CD8-positive, alpha-beta memory T cell (primary cell): ENCODE measurements at regions of chr7 and their contacts with region 1.

Region 1: DNA sequence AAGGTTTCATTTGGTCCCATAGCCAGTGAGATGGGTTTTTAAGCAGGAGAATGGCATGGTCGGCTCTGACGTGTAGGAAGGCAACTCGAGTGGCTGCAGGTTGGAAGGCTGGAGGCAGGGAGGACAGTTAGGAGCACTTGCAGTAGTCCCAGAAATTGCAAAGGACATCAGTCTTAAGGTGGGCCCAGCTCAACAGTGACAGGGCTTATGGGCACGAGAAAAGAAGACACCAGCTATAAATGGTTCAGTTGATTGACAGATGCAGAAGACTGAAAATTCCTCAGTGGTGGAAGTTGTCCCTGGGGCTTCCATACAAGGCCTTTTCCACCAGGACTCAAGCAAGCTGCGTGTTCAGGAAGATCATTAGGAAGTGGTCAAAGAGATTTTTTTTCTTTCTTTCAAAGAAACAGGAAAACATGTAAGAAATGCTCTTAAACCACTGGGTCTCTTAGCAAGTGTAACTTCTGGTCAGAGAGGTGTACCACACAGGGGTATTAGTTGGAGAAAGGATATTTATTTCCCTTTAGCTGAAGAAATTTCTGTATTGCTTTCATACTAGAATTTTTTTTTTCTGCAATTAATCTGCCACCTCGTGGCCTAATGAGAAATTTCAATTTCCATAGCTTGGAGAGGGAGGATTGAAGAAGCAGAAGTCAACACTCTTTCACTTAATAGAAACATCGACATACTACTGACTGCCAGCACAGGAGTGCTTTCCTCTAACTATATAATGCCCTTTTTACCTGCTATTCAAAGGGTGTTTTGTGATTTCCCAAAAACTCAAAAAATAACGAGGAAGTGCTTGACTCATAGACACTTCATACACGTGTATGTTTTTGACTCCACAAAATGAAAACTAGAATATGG is 177.4 kb upstream of the NAMPT start:
- DNase-seq: peak in 1 of 5 donors; percentile 6
- H3K4me3 ChIP-seq: no peak overlapping the region
- H3K4me3 Mint-ChIP-seq: no peak overlapping the region
- H3K27ac ChIP-seq: no peak overlapping the region
- H3K27ac Mint-ChIP-seq: no peak overlapping the region
- H3K4me1 ChIP-seq: no peaks in the 10 kb centered on the region
- H3K4me1 Mint-ChIP-seq: no peaks in the 10 kb centered on the region
- H3K27me3 ChIP-seq: no peaks in the 10 kb centered on the region
- H3K27me3 Mint-ChIP-seq: no peaks in the 10 kb centered on the region

Region 2: DNA sequence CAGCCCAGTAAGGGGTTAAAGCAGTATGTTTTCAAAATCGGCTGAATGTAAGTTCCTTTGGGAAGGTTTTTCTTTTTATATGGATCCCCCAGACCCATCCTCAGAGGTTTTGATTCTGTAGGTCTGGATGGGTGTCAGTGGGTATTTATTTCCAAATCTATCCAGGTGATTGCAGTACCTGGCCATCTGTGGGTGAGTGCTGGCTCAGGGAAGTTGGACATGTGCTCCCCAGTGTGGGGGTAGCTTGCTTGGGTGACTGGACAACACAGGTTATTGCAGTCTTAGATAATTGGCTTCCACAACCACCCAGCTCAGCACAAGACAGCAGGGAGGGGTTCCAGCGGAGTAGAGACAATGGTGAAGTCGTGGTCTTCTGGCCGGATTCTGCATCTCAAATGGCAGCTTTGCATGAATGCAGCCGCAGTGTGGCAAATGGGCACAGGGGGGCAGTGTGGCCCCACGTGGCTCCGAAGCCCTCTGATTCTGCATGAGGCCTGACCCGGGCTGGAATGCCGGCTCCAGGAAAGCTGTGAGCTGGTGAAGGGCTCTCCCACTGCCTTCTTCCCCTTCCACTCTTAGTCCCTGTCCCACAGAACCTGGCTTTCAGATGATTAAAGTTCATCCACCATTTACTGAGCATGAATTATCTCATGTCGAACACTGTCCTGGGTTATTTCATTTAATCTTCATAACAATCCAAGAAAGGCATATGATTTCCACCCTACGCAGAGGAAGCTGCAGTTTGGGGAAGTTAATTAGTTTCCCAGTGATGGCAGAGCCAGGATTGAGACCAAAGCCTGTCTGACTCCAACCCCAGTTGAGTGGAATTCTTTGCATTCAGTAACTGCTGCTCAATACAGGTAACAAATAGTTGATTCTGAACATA is 285.6 kb before region 1 on chr7:
- CTCF ChIA-PET with region 1: interaction called, 100 read pairs
- POLR2A ChIA-PET with region 1: no interaction called
- DNase-seq: peak; percentile 41 to 69 (median 49)
- H3K4me3 ChIP-seq: no peak overlapping the region
- H3K4me3 Mint-ChIP-seq: no peak overlapping the region
- H3K27ac ChIP-seq: no peak overlapping the region
- H3K27ac Mint-ChIP-seq: no peak overlapping the region
- H3K4me1 ChIP-seq: no peaks in the 10 kb centered on the region
- H3K4me1 Mint-ChIP-seq: peaks cover 2 to 7% (median 5%) of the 10 kb centered on the region in 3 donors
- H3K27me3 ChIP-seq: no peaks in the 10 kb centered on the region
- H3K27me3 Mint-ChIP-seq: peaks cover 4 to 14% of the 10 kb centered on the region in 2 donors